Ascending aorta (tissue), 2 donors: ENCODE measurements at regions of chr17 and their contacts with region 1.

Region 1: GRCh38 chr17:80832888-80833583 is 158.6 kb upstream of the CHMP6 start:
- DNase-seq: peak; percentile 78 to 95
- H3K4me3 ChIP-seq: peak overlapping the region; percentile 49 to 63
- H3K27ac ChIP-seq: peak overlapping the region; percentile 77 to 87
- H3K4me1 ChIP-seq: peaks cover 0 to 12% of the 10 kb centered on the region in 2 donors
- H3K27me3 ChIP-seq: no peaks in the 10 kb centered on the region
- CTCF ChIP-seq: no peak

Region 2: DNA sequence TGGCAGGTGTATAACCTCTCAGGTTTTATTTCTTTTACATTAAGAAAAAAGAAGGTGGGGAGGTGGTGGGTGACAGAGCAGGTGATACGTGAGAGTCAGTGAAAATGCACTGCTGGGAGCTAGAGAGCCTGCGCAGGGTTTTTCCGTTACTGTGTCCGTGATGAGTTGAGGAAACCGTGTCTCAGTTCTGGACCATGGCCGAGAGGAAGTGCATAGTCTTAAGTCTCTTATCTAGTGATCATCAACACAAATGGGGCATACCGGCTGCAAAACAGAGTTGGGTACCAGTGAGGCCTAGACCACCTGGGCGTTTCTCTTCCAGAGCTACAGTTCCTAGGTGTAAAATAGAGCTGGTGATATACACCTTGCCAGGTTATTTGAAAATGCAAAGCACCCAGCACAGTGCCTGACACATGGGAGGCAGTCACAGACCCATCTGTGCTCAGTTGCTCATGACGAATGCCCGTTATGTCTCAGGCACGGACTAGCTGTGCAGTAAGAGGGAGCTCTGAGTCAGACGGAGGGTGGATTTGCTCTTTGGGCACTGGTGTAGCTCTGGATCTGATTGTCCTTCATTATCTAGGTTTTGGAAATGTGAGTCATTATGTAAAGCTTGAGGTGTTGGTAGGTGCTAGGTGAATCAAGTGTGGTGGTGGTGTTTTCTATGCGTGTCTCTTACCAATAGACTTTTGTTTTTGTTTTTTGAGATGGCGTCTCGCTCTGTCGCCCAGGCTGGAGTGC is 227.5 kb before region 1 on chr17:
- intact Hi-C with region 1: no loop called
- DNase-seq: no peak
- H3K4me3 ChIP-seq: no peak overlapping the region
- H3K27ac ChIP-seq: no peak overlapping the region
- H3K4me1 ChIP-seq: no peaks in the 10 kb centered on the region
- H3K27me3 ChIP-seq: no peaks in the 10 kb centered on the region
- CTCF ChIP-seq: no peak

Region 3: DNA sequence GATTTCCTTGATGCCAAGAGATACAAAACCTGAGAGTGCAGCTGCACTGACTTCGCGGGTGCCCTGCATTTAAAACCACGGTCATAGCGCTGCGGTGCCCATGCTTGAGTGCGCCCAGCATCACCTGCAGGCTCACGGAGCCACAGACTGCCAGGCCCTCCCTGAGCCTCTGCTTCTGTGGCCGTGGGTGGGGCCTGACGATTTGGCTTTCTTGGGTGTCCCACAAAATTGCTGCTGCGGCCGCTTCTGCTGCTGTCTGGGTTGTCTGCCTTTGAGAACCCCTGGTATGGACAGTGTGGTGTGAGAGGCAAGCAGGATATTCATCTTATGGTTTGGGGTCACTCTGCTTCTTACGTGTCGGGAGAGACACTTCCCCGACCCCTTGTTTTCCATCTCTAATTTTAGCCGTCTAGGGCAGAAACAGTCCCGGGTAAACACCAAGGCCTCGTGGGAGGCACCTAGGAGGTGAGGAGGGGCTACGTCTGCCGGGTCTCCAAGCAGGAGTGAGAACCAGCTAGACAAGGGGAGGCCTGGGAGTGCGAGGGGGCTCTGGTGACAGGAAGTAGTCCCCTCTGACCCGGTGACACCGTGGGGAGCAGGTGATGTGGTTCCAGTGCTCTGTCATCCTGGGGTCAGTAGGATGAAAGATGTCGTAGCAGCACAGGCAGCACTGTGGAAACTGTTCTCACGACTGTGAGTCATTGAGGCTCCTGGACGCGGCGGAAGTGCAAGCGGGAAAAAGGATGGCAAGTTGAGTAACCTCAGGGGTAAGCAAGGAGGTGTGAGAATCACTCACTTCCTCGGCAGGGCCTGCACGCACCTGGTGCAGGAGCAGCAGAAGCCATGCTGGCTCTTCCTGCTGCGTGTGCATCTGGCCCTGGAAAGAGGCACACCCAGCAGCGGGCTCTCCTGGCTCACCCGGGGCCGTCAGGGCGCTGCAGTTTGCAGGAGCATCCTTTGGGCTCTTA is 112.1 kb before region 1 on chr17:
- intact Hi-C with region 1: no loop called
- DNase-seq: no peak
- H3K4me3 ChIP-seq: no peak overlapping the region
- H3K27ac ChIP-seq: no peak overlapping the region
- H3K4me1 ChIP-seq: no peaks in the 10 kb centered on the region
- H3K27me3 ChIP-seq: no peaks in the 10 kb centered on the region
- CTCF ChIP-seq: no peak

Region 4: GRCh38 chr17:80773243-80773991 is 59.6 kb before region 1 on chr17:
- intact Hi-C with region 1: loop called (anchors 5 kb)
- DNase-seq: peak in 1 of 2 donors; percentile 79
- H3K4me3 ChIP-seq: no peak overlapping the region
- H3K27ac ChIP-seq: peak overlapping the region; percentile 51 to 56
- H3K4me1 ChIP-seq: peaks cover 0 to 15% of the 10 kb centered on the region in 2 donors
- H3K27me3 ChIP-seq: no peaks in the 10 kb centered on the region
- CTCF ChIP-seq: peak in 1 of 3 experiments; percentile 14

Region 5: DNA sequence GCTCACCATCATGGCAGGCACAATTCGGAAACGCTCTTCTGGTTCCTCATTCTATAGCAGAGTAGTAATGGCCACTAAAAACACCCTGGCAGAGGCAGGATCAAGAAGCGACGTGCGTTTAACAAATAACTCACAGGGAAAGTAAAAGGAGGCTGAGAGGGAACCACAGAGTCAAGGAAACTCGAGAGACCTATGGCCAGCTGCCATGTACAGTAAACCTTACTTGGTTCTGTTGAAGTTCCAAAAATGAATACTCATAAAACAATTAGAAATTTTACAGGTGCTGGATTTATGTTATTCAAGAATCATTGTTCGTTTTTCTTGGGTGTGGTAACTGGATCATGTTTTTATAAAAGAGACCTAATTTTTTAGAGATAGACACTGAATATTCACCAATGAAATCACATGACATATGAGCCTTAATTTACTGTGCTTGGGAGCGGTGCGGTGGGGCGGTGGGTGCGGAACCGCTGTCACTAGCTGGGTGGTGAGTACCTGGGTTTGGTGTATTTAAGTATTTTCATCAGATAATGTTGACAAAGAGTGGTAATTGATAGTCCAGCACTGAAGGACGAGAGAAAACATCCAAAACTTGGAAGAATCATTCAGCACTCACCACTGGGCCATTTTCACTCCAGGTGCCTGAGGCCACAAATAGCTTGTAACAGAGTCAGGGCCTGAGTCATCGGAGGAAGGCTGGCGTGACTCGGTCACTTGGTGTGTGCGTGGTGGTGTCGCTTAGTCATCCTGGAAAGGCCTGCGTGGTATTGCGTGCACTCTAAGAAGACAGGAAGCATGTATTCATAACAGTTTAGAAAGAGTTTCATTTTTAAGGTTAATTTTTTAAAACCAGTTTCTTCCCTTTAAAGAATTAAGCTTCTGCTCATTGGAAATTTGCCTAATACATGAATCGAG is 23.2 kb after region 1 on chr17:
- intact Hi-C with region 1: loop called (anchors 2 kb)
- DNase-seq: peak; percentile 70 to 92
- H3K4me3 ChIP-seq: no peak overlapping the region
- H3K27ac ChIP-seq: peak overlapping the region; percentile 70 to 79
- H3K4me1 ChIP-seq: peaks cover 6 to 17% of the 10 kb centered on the region in 2 donors
- H3K27me3 ChIP-seq: no peaks in the 10 kb centered on the region
- CTCF ChIP-seq: no peak